Lower leg skin (tissue), 4 donors: ENCODE measurements at regions of chr15 and their contacts with region 1.

Region 1: DNA sequence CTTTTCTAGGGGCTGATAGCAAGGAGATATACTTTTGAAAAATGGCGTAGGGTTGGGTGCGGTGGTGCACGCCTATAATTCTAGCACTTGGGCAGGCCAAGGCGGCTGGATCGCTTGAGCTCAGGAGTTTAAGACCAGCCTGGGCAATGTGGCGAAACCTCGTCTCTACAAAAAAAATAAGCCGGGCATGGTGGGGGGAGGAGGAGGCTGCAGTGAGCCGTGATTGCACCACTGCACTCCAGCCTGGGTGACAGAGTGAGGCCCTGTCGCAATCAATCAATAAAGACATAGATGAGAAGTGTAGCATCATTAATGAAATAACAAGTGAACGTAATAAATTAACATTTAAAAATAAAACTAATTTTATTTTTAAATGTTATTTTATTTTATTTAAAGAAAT is 134.6 kb downstream of the SLCO3A1 start:
- DNase-seq: no peak
- H3K4me3 ChIP-seq: no peak overlapping the region
- CTCF ChIP-seq: no peak
- POLR2A ChIP-seq: no peak

Region 2: DNA sequence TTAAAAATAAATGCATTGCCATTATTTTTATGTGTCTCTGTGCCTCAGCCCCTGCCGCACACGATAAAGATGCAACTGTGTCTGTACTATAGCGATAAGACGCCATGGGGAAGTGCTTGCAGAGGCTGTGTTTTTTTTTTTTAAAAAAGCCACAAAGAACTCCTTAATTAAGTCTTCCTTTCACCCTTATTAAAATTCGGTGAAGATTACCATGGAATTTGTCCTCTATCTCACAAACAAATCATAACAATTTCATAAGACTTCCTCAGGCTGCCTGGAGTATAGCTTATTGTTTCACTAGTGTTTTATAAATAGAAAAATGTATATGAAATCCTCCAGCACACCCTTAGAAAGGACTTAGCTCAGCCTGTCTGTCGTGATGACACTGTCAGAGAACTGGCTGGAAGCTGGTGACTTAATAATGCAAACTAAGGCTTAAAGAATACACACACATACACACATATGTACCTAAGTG is 509.3 kb before region 1 on chr15:
- intact Hi-C with region 1: loop called (anchors 5 kb)
- DNase-seq: no peak
- H3K4me3 ChIP-seq: no peak overlapping the region
- CTCF ChIP-seq: no peak
- POLR2A ChIP-seq: no peak